Caco-2 (cell line): ENCODE measurements at regions of chr5 and their contacts with region 1.

Region 1: GRCh38 chr5:32585446-32586275 is at the start of gene SUB1:
- DNase-seq: peak; percentile 93
- H3K4me3 ChIP-seq: peak within 1 kb of the TSS; percentile 100
- H3K4me3 Mint-ChIP-seq: peak within 1 kb of the TSS; percentile 93
- H3K27ac Mint-ChIP-seq: peak within 1 kb of the TSS; percentile 91
- H3K4me1 ChIP-seq: peaks cover 16% of the 10 kb centered on the region
- H3K4me1 Mint-ChIP-seq: peaks cover 7% of the 10 kb centered on the region
- H3K27me3 ChIP-seq: no peaks in the 10 kb centered on the region
- H3K27me3 Mint-ChIP-seq: peaks cover 2% of the 10 kb centered on the region
- CTCF ChIP-seq: no peak
- total RNA-seq, gene SUB1: 281 and 293 TPM in 2 replicates

Region 2: DNA sequence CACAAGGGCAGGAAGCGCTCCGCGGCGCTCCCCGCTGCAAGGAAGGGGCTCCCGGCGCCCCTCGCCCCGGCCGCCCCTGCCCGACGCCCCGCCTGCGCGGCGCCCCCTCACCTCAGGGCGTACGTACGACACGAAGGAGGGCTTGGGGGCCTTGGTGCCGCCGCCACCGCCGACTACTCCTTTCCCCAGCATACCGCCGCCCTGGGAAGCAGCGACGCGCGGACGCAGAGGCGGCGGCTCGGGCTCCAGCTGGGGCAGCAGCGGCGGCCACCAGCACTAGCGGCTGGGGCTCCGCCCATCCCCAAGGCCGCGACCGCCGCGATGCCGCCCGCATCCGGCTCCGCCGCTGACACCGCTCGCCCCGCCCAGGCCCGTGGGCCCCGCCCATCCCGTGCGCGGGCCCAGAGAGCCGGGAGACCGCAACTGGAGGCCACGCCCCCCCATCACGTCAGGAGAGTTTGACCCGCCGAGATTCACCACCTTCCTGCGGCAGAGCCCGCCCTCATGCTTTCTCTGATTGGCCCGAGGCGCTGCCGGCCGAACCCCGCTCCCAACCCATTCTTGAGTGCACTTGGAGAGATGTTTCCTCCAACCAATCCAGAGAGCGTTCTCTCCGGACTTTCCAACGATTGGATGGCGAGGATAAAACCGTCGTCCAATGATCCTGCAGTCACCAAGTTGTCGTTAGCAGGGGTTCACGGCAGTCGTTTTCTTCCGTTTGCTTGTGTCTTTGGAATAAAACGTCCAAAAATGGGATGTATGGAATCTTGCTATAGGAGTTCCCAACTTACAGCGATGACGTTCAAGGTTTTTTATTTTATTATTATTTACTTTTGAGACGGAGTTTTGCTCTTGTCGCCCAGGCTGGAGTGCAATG is 272.8 kb before region 1 on chr5 and contains the start of gene MTMR12:
- CTCF ChIA-PET with region 1: no interaction called
- POLR2A ChIA-PET with region 1: no interaction called
- intact Hi-C with region 1: loop called (anchors 2 kb)
- DNase-seq: peak; percentile 99 to 100
- H3K4me3 ChIP-seq: peak within 1 kb of the TSS; percentile 89
- H3K4me3 Mint-ChIP-seq: peak within 1 kb of the TSS; percentile 78
- H3K27ac Mint-ChIP-seq: peak within 1 kb of the TSS; percentile 66
- H3K4me1 ChIP-seq: peaks cover 10% of the 10 kb centered on the region
- H3K4me1 Mint-ChIP-seq: peaks cover 21% of the 10 kb centered on the region
- H3K27me3 ChIP-seq: no peaks in the 10 kb centered on the region
- H3K27me3 Mint-ChIP-seq: no peaks in the 10 kb centered on the region
- CTCF ChIP-seq: no peak
- total RNA-seq, gene MTMR12: 35.1 and 35.7 TPM in 2 replicates

Region 3: GRCh38 chr5:32444431-32445286 is 141.0 kb before region 1 on chr5 and contains the start of gene ZFR:
- CTCF ChIA-PET with region 1: interaction called, 4 read pairs
- POLR2A ChIA-PET with region 1: interaction called, 3 read pairs
- intact Hi-C with region 1: loop called (anchors 5 kb)
- DNase-seq: peak; percentile 95
- H3K4me3 ChIP-seq: peak within 1 kb of the TSS; percentile 98
- H3K4me3 Mint-ChIP-seq: peak within 1 kb of the TSS; percentile 82
- H3K27ac Mint-ChIP-seq: peak within 1 kb of the TSS; percentile 39
- H3K4me1 ChIP-seq: peaks cover 12% of the 10 kb centered on the region
- H3K4me1 Mint-ChIP-seq: peaks cover 18% of the 10 kb centered on the region
- H3K27me3 ChIP-seq: no peaks in the 10 kb centered on the region
- H3K27me3 Mint-ChIP-seq: no peaks in the 10 kb centered on the region
- CTCF ChIP-seq: no peak
- total RNA-seq, gene ZFR: 75.1 and 78.3 TPM in 2 replicates

Region 4: DNA sequence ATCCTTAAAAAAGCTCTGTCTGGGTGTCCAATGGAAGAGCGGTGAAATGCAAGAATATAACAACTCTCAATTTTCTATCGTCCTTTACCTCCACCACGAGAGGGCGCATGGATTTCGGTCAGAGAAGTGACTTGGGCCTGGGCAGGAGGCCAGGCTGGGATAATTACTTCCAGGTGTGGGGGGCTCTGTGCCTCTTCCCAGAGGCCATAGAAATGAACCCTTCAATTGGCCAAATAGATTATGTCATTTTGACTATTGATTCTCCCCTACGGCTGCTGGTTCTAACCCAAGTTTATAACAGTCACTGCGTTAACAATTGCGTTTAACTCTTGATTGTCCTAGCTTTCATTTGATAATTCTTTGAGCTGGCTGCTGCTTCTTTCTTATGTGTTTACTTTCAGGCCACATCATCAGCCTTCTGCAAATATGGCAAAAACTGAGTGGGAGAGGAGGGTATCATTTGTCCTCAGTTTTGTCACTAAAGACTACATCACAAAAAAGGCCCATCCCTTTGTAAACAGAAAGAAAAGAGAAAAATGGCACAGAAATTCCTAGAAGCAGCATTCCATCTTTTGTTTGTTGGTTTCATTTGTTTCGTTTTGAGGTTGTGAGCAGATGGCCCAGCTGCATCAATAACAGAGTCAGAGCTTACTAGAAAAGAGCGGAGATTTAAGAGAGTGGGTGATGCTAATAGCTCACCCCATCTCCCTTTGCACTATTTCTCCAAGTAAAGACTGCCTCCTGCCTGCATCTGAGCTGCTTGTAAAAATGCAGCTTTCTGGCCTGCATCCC is 95.7 kb before region 1 on chr5:
- CTCF ChIA-PET with region 1: interaction called, 85 read pairs
- POLR2A ChIA-PET with region 1: interaction called, 9 read pairs
- intact Hi-C with region 1: loop called (anchors 1 kb)
- DNase-seq: peak; percentile 72 to 78
- H3K4me3 ChIP-seq: no peak overlapping the region
- H3K4me3 Mint-ChIP-seq: no peak overlapping the region
- H3K27ac Mint-ChIP-seq: peak overlapping the region; percentile 76
- H3K4me1 ChIP-seq: peaks cover 11% of the 10 kb centered on the region
- H3K4me1 Mint-ChIP-seq: peaks cover 19% of the 10 kb centered on the region
- H3K27me3 ChIP-seq: no peaks in the 10 kb centered on the region
- H3K27me3 Mint-ChIP-seq: no peaks in the 10 kb centered on the region
- CTCF ChIP-seq: peak; percentile 75 to 87

Region 5: DNA sequence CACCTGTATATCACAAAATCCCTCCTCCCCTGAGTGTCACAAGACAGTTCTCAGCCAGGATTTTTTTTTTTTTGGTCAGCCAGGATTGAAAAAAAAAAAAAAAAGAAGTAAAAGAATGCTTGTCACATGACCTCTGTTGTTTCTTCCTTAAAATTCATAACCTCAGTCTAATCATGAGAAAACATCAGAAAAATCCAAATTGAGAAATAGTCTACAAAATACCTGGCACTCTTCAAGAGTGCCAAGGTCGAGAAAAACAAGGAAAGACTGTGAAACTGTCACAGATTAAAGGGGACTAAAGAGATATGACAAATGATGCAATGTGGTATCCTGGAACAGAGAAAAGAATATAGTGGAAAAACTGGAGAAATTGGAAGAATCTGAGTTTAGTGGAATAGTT is 58.9 kb before region 1 on chr5:
- CTCF ChIA-PET with region 1: interaction called, 5 read pairs
- POLR2A ChIA-PET with region 1: no interaction called
- intact Hi-C with region 1: loop called (anchors 2 kb)
- DNase-seq: no peak
- H3K4me3 ChIP-seq: no peak overlapping the region
- H3K4me3 Mint-ChIP-seq: no peak overlapping the region
- H3K27ac Mint-ChIP-seq: peak overlapping the region; percentile 26
- H3K4me1 ChIP-seq: peaks cover 10% of the 10 kb centered on the region
- H3K4me1 Mint-ChIP-seq: peaks cover 12% of the 10 kb centered on the region
- H3K27me3 ChIP-seq: no peaks in the 10 kb centered on the region
- H3K27me3 Mint-ChIP-seq: no peaks in the 10 kb centered on the region
- CTCF ChIP-seq: no peak

Region 6: GRCh38 chr5:32572778-32573480 is 12.7 kb before region 1 on chr5:
- CTCF ChIA-PET with region 1: interaction called, 6 read pairs
- POLR2A ChIA-PET with region 1: interaction called, 3 read pairs
- intact Hi-C with region 1: loop called (anchors 1 kb)
- DNase-seq: no peak
- H3K4me3 ChIP-seq: no peak overlapping the region
- H3K4me3 Mint-ChIP-seq: no peak overlapping the region
- H3K27ac Mint-ChIP-seq: no peak overlapping the region
- H3K4me1 ChIP-seq: peaks cover 24% of the 10 kb centered on the region
- H3K4me1 Mint-ChIP-seq: no peaks in the 10 kb centered on the region
- H3K27me3 ChIP-seq: no peaks in the 10 kb centered on the region
- H3K27me3 Mint-ChIP-seq: no peaks in the 10 kb centered on the region
- CTCF ChIP-seq: no peak